A549 (cell line): ENCODE measurements at regions of chr1 and their contacts with region 1.

Region 1: DNA sequence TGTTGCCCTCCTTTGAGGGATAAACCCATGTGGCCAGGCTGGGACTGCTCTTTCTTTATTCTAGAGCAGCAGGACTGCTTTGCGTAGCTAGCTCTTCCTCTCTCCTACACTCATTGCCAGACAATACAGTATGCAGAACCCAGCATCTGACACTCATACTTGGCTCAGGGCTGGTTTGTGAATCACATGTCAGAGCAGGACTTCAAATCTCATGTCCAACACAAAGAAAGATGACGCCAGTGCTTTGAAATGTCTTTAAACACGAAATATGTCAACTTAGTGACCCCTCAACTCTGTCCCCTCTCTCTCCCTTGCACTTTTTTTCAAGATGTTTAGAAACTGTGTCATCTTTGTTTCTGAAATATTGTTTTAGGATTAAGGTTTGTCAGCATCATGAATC is 135.0 kb downstream of the TGFB2 start:
- DNase-seq: peak in 1 of 2 experiments; percentile 94
- ATAC-seq: peak; percentile 89 to 91
- H3K4me3 ChIP-seq: no peak overlapping the region
- H3K27ac ChIP-seq: peak overlapping the region; percentile 86 to 91
- H3K4me1 ChIP-seq: peaks cover 62% of the 10 kb centered on the region
- CTCF ChIP-seq: no peak
- EP300 ChIP-seq: no peak
- POLR2A ChIP-seq: no peak
- RAD21 ChIP-seq: peak in 1 of 2 experiments; percentile 36; a peak in 2 of 5 replicates

Region 2: DNA sequence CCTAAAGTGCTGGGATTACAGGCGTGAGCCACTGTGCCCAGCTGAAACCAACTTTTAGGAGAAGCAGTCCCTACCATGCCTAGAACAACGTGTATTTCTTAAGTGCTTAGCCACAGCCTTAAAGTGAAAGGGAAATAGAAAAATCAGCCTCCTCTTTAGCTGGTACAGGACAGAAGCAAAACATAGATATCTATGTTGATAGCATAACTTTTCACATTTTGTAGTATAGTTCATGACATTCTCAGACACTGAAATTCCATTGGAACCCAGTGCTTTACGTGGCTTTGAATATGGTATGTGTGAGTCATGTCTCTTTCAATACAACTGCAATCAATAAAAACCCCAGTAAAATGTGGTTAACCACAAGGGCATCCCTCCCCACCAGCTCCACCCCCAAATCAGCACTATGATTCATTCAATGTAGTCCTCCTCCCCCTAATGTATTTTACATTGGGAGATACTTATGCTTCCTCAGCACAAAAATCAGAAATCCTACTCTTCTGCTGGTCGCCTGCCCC is 102.9 kb before region 1 on chr1:
- CTCF ChIA-PET with region 1: interaction called, 3 read pairs
- POLR2A ChIA-PET with region 1: interaction called, 11 read pairs
- DNase-seq: peak; percentile 76 to 93
- ATAC-seq: peak; percentile 56 to 66
- H3K4me3 ChIP-seq: peak overlapping the region; percentile 7; the same call in 1 of the 3 replicates
- H3K27ac ChIP-seq: peak overlapping the region; percentile 92 to 94
- H3K4me1 ChIP-seq: peaks cover 95% of the 10 kb centered on the region
- CTCF ChIP-seq: no peak
- EP300 ChIP-seq: peak; percentile 87 to 95; a peak in 4 of 5 replicates
- POLR2A ChIP-seq: no peak
- RAD21 ChIP-seq: peak; percentile 24 to 46; a peak in 4 of 5 replicates

Region 3: GRCh38 chr1:218412171-218412570 is 68.0 kb before region 1 on chr1:
- CTCF ChIA-PET with region 1: no interaction called
- POLR2A ChIA-PET with region 1: no interaction called
- DNase-seq: no peak
- ATAC-seq: no peak
- H3K4me3 ChIP-seq: no peak overlapping the region
- H3K27ac ChIP-seq: peak overlapping the region in 1 of 2 experiments; percentile 38; a peak in 1 of 6 replicates
- H3K4me1 ChIP-seq: peaks cover 41% of the 10 kb centered on the region
- CTCF ChIP-seq: no peak
- EP300 ChIP-seq: no peak
- POLR2A ChIP-seq: no peak
- RAD21 ChIP-seq: no peak

Region 4: GRCh38 chr1:218499011-218499691 is 19.0 kb after region 1 on chr1:
- CTCF ChIA-PET with region 1: interaction called, 4 read pairs
- POLR2A ChIA-PET with region 1: interaction called, 23 read pairs
- DNase-seq: peak in 1 of 2 experiments; percentile 86
- ATAC-seq: peak; percentile 54 to 70
- H3K4me3 ChIP-seq: peak overlapping the region; percentile 27
- H3K27ac ChIP-seq: peak overlapping the region; percentile 92 to 93
- H3K4me1 ChIP-seq: peaks cover 44% of the 10 kb centered on the region
- CTCF ChIP-seq: no peak
- EP300 ChIP-seq: peak in 1 of 2 experiments; percentile 15; a peak in 1 of 5 replicates
- POLR2A ChIP-seq: no peak
- RAD21 ChIP-seq: no peak